Natural killer cell (primary cell): ENCODE measurements at regions of chr11 and their contacts with region 1.

Region 1: GRCh38 chr11:100709233-100709957 is 22.3 kb downstream of the ARHGAP42 start:
- DNase-seq: no peak
- ATAC-seq: no peak
- H3K4me3 ChIP-seq: no peak overlapping the region
- H3K4me3 Mint-ChIP-seq: no peak overlapping the region
- H3K27ac ChIP-seq: no peak overlapping the region
- H3K27ac Mint-ChIP-seq: no peak overlapping the region
- H3K4me1 ChIP-seq: no peaks in the 10 kb centered on the region
- H3K4me1 Mint-ChIP-seq: peaks cover 10 to 11% of the 10 kb centered on the region in 2 donors
- H3K27me3 ChIP-seq: no peaks in the 10 kb centered on the region
- H3K27me3 Mint-ChIP-seq: no peaks in the 10 kb centered on the region
- CTCF ChIP-seq: no peak

Region 2: GRCh38 chr11:100640646-100641045 is 68.7 kb before region 1 on chr11:
- intact Hi-C with region 1: loop called (anchors 10 kb)
- DNase-seq: no peak
- ATAC-seq: no peak
- H3K4me3 ChIP-seq: no peak overlapping the region
- H3K4me3 Mint-ChIP-seq: no peak overlapping the region
- H3K27ac ChIP-seq: no peak overlapping the region
- H3K27ac Mint-ChIP-seq: no peak overlapping the region
- H3K4me1 ChIP-seq: no peaks in the 10 kb centered on the region
- H3K4me1 Mint-ChIP-seq: peaks cover 1 to 4% of the 10 kb centered on the region in 2 donors
- H3K27me3 ChIP-seq: no peaks in the 10 kb centered on the region
- H3K27me3 Mint-ChIP-seq: peaks cover 6 to 20% of the 10 kb centered on the region in 2 donors
- CTCF ChIP-seq: no peak